Lower leg skin (tissue), 4 donors: ENCODE measurements at regions of chr20 and their contacts with region 1.

Region 1: GRCh38 chr20:39264506-39265172 is 302.5 kb downstream of the DHX35 start:
- DNase-seq: peak; percentile 70 to 88
- H3K4me3 ChIP-seq: no peak overlapping the region
- CTCF ChIP-seq: peak in 1 of 3 donors; percentile 28
- POLR2A ChIP-seq: no peak

Region 2: DNA sequence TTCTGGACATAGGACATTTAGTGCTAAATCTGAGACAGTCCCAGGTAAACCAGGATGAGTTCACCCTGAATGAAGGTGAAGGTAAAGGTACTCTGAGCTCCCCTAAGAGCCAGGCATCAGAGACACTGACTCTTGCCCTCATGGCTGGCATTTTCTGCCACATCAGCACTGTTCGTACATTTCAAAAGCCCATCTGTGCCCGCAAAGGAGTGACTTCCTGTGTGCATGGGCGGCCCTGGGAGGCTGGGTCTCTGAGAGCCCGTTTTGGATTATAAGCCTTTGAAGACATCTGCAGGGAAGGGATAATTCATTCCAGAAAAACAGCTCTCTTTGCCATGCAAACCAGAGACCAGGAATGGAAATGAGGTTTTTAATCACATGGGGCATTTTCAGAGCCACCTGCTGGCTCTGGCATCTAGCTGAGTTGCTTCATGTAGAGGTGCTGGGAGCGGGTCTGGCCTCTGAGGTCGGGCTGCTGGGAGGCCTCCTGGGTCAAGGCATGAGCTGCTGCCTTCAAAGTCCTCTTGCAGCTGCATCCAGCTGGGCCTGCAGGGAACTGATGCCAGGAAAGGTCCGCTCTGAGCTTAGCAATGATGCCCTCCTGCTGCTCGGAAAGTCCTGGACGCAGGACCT is 45.8 kb after region 1 on chr20:
- intact Hi-C with region 1: no loop called
- DNase-seq: no peak
- H3K4me3 ChIP-seq: no peak overlapping the region
- CTCF ChIP-seq: no peak
- POLR2A ChIP-seq: no peak

Region 3: DNA sequence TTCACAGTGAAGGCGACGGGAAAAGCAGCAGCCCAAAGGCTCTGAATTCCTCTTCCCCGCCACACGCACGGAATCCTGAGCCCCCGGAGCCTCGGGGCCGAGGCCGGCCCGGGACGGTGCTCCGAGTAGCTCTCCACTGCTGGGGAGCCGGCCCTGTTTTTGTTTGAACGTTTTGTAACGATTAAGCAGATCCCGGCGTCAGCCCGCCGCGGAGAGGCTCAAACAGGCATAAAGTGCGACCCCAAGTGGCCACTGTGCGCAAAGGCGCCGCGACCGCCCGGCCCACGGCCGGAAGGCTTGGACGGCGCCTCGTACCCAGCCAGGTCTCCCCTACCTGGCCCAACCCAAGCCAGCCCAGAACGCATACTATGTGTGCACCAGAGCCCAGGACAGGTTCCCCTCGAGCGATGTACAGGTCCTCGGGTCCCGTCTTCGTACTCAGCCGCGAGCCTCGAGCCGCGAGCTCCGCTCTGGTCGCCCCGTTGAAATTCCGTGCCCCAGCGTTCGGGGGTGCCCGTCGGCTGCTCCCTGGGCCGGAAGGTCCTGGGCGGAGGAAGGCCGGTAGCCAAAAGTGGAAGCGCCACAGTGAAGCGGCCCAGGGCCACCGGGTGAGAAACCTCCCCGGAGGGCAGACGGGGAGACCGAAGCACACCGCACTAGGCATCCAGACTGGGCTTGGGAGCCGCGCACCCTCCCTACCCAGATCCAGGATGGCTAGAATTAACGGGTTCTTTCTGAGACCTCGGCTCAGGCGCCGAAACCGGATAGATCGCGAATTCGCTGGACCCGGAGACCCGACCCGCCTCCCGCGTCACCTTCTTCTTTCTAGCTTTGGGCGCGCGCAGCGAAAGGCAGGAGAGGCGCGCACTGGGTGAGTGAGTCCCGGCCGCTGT is 1425.5 kb after region 1 on chr20:
- intact Hi-C with region 1: loop called (anchors 10 kb)
- DNase-seq: peak; percentile 91 to 98
- H3K4me3 ChIP-seq: peak overlapping the region; percentile 34
- CTCF ChIP-seq: peak in 1 of 3 donors; percentile 89
- POLR2A ChIP-seq: no peak

Region 4: DNA sequence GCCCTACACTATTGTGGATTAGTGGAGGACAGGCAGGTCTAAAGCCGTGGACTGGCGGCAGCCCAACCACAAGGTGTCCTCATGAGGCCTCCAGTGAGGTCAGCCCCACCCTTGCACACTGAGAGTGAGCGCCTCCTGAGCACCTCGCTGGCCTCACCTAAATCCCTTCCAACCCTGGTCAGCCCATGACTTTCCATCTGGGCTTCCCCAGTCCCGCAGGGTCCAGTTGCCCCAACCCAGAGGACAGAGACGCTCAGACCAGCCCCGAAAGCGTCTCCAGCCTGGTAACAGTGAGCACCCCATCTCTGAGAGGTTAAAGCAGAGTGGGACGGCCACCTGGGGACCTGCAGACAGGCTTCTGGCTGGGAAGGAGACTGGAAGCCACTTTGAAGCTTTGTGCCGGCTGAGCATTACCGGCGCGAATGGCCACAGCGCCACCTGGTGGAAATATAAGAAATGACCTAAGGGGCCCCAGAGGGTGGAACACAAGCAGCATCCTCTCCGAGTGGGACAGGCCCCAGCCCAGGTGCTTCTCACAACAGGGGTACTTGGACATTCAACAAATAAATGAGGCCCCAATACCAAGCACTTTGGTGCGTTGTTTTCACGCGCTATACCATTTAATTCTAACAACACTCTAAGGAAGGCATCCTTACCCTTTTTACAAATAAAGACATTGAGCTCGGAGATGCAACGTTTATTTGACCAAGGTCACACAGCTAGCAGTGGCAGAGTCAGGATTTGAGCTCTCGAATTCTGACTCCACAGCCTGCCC is 1698.3 kb after region 1 on chr20:
- intact Hi-C with region 1: loop called (anchors 10 kb)
- DNase-seq: peak; percentile 53 to 95
- H3K4me3 ChIP-seq: no peak overlapping the region
- CTCF ChIP-seq: peak in 2 of 3 donors; percentile 59 to 75
- POLR2A ChIP-seq: no peak